Caco-2 (cell line): ENCODE measurements at regions of chr17 and their contacts with region 1.

Region 1: DNA sequence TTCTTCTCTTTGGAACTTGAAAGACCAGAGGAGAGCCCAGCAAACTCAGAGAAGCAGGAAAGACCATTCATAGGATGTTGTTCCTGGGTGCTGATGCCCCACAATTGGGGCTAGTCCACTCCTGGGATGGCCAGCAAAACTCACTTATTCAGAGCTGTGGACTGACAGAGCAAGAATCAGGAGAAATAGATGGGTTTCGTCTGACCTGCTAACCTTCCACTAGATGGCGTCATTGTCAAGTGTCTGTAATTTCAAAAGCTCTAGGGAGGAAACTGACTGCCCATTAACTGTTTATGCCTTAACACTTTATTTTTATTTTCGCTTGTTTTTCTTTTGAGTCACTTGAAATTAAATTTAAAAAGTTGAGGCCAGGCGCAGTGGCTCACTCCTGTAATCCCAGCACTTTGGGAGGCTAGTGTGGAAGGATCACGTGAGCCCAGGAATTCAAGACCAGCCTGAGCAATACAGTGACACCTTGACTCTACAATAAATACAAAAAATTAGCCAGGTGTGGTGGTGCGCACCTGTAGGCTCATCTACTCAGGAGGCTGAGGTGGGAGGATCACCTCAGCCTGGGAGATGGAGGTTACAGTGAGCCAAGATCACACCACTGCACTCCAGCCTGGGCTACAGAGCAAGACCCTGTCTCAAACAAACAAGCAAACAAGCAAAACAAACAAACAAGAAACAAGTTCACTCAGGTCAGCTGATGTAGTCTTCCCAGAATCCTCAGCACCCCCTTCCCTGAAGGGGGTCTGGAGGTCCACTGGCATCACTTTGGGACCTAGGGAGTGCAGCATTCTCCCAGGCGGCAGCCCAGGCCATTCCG is 28.6 kb upstream of the MILR1 start:
- DNase-seq: peak in 1 of 2 experiments; percentile 66
- H3K4me3 ChIP-seq: no peak overlapping the region
- H3K4me3 Mint-ChIP-seq: no peak overlapping the region
- H3K27ac Mint-ChIP-seq: no peak overlapping the region
- H3K4me1 ChIP-seq: peaks cover 5% of the 10 kb centered on the region; the same call in 1 of the 2 replicates
- H3K4me1 Mint-ChIP-seq: no peaks in the 10 kb centered on the region
- H3K27me3 ChIP-seq: no peaks in the 10 kb centered on the region
- H3K27me3 Mint-ChIP-seq: no peaks in the 10 kb centered on the region
- CTCF ChIP-seq: peak; percentile 66 to 72

Region 2: GRCh38 chr17:64306850-64307463 is 113.4 kb before region 1 on chr17:
- CTCF ChIA-PET with region 1: interaction called, 52 read pairs
- POLR2A ChIA-PET with region 1: interaction called, 6 read pairs
- intact Hi-C with region 1: loop called (anchors 1 kb)
- DNase-seq: peak; percentile 72 to 77
- H3K4me3 ChIP-seq: no peak overlapping the region
- H3K4me3 Mint-ChIP-seq: no peak overlapping the region
- H3K27ac Mint-ChIP-seq: no peak overlapping the region
- H3K4me1 ChIP-seq: peaks cover 38% of the 10 kb centered on the region
- H3K4me1 Mint-ChIP-seq: peaks cover 22% of the 10 kb centered on the region
- H3K27me3 ChIP-seq: no peaks in the 10 kb centered on the region
- H3K27me3 Mint-ChIP-seq: no peaks in the 10 kb centered on the region
- CTCF ChIP-seq: peak; percentile 80 to 89

Region 3: DNA sequence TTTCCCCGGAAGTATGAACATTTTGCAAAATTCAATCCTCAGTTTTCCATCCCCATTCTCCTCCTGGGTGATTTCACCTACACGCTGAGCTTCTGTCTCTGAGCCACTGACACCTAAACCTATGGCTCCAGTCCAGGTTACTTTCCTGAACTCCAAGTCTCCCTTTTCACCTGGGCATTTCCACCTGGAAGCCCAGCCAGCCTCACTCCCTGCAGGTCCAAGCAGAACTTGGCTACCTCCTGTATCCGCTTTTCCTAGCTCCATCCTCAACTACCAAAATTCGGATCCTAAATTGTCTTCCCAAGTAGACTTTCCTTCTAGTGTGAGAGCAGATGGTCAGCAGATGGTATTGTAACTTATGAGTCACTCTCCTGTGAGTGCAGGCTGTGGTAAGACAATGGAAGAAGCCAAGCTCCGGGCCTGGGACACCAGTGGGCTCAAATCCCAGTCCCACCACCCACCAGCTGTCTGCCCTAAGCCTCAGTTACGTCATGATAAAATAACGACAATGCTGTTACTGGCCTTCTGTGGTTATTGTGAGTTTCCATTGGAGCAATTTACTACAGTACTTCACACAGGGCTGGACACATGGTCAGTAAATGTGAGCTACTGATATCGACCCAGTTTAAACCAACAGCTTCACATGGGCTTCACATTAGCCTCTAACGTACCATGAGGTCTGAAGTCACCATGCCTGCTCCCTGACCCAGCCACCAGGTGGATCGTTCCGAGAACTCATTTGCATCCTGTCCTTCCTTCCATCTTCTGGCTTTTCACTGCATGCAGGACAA is 63.0 kb before region 1 on chr17:
- CTCF ChIA-PET with region 1: interaction called, 6 read pairs
- POLR2A ChIA-PET with region 1: no interaction called
- intact Hi-C with region 1: loop called (anchors 1 kb)
- DNase-seq: no peak
- H3K4me3 ChIP-seq: no peak overlapping the region
- H3K4me3 Mint-ChIP-seq: no peak overlapping the region
- H3K27ac Mint-ChIP-seq: no peak overlapping the region
- H3K4me1 ChIP-seq: peaks cover 13% of the 10 kb centered on the region
- H3K4me1 Mint-ChIP-seq: peaks cover 9% of the 10 kb centered on the region
- H3K27me3 ChIP-seq: no peaks in the 10 kb centered on the region
- H3K27me3 Mint-ChIP-seq: no peaks in the 10 kb centered on the region
- CTCF ChIP-seq: no peak

Region 4: GRCh38 chr17:64466019-64466685 is 45.8 kb after region 1 on chr17:
- CTCF ChIA-PET with region 1: no interaction called
- POLR2A ChIA-PET with region 1: no interaction called
- intact Hi-C with region 1: no loop called
- DNase-seq: no peak
- H3K4me3 ChIP-seq: no peak overlapping the region
- H3K4me3 Mint-ChIP-seq: no peak overlapping the region
- H3K27ac Mint-ChIP-seq: no peak overlapping the region
- H3K4me1 ChIP-seq: 0 out of 2 replicates have a peak, but pooled peaks cover 9% of the 10 kb centered on the region
- H3K4me1 Mint-ChIP-seq: no peaks in the 10 kb centered on the region
- H3K27me3 ChIP-seq: no peaks in the 10 kb centered on the region
- H3K27me3 Mint-ChIP-seq: no peaks in the 10 kb centered on the region
- CTCF ChIP-seq: no peak

Region 5: GRCh38 chr17:64496786-64497564 is 76.6 kb after region 1 on chr17 and contains the start of gene POLG2:
- CTCF ChIA-PET with region 1: interaction called, 29 read pairs
- POLR2A ChIA-PET with region 1: interaction called, 4 read pairs
- intact Hi-C with region 1: loop called (anchors 2 kb)
- DNase-seq: peak; percentile 94 to 96
- H3K4me3 ChIP-seq: peak within 1 kb of the TSS; percentile 55
- H3K4me3 Mint-ChIP-seq: peak within 1 kb of the TSS; percentile 96
- H3K27ac Mint-ChIP-seq: peak within 1 kb of the TSS; percentile 92
- H3K4me1 ChIP-seq: peaks cover 26% of the 10 kb centered on the region
- H3K4me1 Mint-ChIP-seq: peaks cover 51% of the 10 kb centered on the region
- H3K27me3 ChIP-seq: no peaks in the 10 kb centered on the region
- H3K27me3 Mint-ChIP-seq: no peaks in the 10 kb centered on the region
- CTCF ChIP-seq: peak; percentile 70 to 71
- total RNA-seq, gene POLG2: 28.9 and 32.9 TPM in 2 replicates

Region 6: GRCh38 chr17:64773836-64774761 is 353.7 kb after region 1 on chr17:
- CTCF ChIA-PET with region 1: no interaction called
- POLR2A ChIA-PET with region 1: no interaction called
- intact Hi-C with region 1: loop called (anchors 10 kb)
- DNase-seq: peak; percentile 96 to 97
- H3K4me3 ChIP-seq: peak overlapping the region; percentile 47
- H3K4me3 Mint-ChIP-seq: peak overlapping the region; percentile 96
- H3K27ac Mint-ChIP-seq: peak overlapping the region; percentile 97
- H3K4me1 ChIP-seq: no peaks in the 10 kb centered on the region
- H3K4me1 Mint-ChIP-seq: no peaks in the 10 kb centered on the region
- H3K27me3 ChIP-seq: no peaks in the 10 kb centered on the region
- H3K27me3 Mint-ChIP-seq: no peaks in the 10 kb centered on the region
- CTCF ChIP-seq: peak; percentile 55 to 82